ENCODE measurements at regions of chr22 and their contacts with region 1.

Region 1: DNA sequence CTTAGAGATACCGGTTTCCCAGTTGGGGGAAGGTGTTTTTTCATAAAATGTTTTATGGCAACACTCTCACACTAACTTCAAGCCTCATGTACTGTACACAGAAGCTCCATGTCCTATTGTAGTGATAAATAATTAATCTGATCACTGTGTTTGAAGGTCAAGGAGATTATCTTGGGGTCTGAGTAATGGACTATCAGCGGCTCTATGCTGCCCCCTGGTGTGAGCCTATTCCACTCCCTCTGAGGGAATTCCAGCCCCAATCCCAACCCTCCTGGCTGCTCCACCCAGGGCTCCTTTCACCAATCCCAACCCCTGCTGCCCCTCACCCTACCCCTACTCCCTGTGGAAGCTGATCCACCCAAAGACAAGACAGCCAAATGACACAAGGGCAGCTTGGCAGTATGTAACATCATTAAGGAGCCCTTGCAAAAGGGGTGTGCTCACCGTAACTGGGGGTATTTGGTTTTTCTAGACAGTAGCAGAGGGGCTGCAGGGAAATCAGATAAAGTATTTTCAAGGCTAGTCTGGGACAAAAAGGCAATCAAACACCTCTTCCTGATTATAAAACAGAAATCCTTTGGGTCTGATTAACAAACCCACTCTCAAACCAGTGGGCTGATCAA is 22.3 kb downstream of the HPS4 start:
- DNase-seq: no peak
- H3K4me3 ChIP-seq: no peak overlapping the region
- H3K27ac ChIP-seq: no peak overlapping the region
- H3K4me1 ChIP-seq: peaks cover 0 to 17% (median 0%) of the 10 kb centered on the region in 3 donors
- H3K27me3 ChIP-seq: no peaks in the 10 kb centered on the region
- CTCF ChIP-seq: peak; percentile 54 to 80 (median 64)
- POLR2A ChIP-seq: no peak

Region 2: GRCh38 chr22:26398741-26399153 is 62.6 kb before region 1 on chr22:
- intact Hi-C with region 1: loop called (anchors 10 kb)
- DNase-seq: no peak
- H3K4me3 ChIP-seq: no peak overlapping the region
- H3K27ac ChIP-seq: no peak overlapping the region
- H3K4me1 ChIP-seq: no peaks in the 10 kb centered on the region
- H3K27me3 ChIP-seq: peaks cover 0 to 39% (median 0%) of the 10 kb centered on the region in 4 donors
- CTCF ChIP-seq: peak in 5 of 6 experiments; percentile 52 to 77 (median 66)
- POLR2A ChIP-seq: no peak

Measured in esophagus squamous epithelium (tissue), 5 donors.